Gastrocnemius medialis (tissue), 4 donors: ENCODE measurements at regions of chr7 and their contacts with region 1.

Region 1: GRCh38 chr7:107277331-107277730 is 108.5 kb downstream of the HBP1 start:
- DNase-seq: peak; percentile 35 to 39
- ATAC-seq: peak; percentile 99 to 100
- H3K4me3 ChIP-seq: peak overlapping the region; percentile 15 to 32 (median 27)
- H3K27ac ChIP-seq: peak overlapping the region; percentile 59 to 83 (median 76)
- H3K4me1 ChIP-seq: peaks cover 14 to 25% of the 10 kb centered on the region in 2 donors
- H3K27me3 ChIP-seq: no peaks in the 10 kb centered on the region
- CTCF ChIP-seq: no peak
- POLR2A ChIP-seq: peak in 1 of 2 donors; percentile 8

Region 2: DNA sequence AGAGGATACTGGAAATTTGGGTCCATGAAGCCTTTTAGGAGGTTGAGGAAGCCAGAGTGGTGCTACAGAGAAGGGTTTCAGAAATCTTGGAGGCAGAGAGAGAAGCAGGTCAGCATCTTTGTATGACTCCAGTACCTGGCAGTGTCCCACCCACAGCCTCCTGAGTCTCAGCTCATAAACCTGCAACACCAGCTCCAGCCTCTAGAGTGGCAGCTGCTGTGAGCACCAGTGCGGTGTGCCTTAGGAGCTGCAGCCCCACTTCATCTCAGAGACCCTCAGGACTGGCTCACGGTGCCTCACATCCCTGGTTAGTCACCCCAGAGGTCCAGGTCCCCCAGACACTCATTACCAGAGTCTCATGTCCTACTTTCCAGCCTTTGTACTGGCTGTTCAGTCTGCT is 317.6 kb before region 1 on chr7:
- in situ Hi-C with region 1: no loop called
- intact Hi-C with region 1: no loop called
- DNase-seq: no peak
- ATAC-seq: no peak
- H3K4me3 ChIP-seq: no peak overlapping the region
- H3K27ac ChIP-seq: no peak overlapping the region
- H3K4me1 ChIP-seq: no peaks in the 10 kb centered on the region
- H3K27me3 ChIP-seq: no peaks in the 10 kb centered on the region
- CTCF ChIP-seq: no peak
- POLR2A ChIP-seq: no peak

Region 3: GRCh38 chr7:107103363-107103762 is 174.0 kb before region 1 on chr7:
- in situ Hi-C with region 1: no loop called
- intact Hi-C with region 1: no loop called
- DNase-seq: no peak
- ATAC-seq: no peak
- H3K4me3 ChIP-seq: no peak overlapping the region
- H3K27ac ChIP-seq: no peak overlapping the region
- H3K4me1 ChIP-seq: no peaks in the 10 kb centered on the region
- H3K27me3 ChIP-seq: no peaks in the 10 kb centered on the region
- CTCF ChIP-seq: no peak
- POLR2A ChIP-seq: no peak

Region 4: GRCh38 chr7:107208024-107208521 is 69.3 kb before region 1 on chr7:
- in situ Hi-C with region 1: no loop called
- intact Hi-C with region 1: loop called (anchors 5 kb)
- DNase-seq: no peak
- ATAC-seq: peak; percentile 67 to 79
- H3K4me3 ChIP-seq: no peak overlapping the region
- H3K27ac ChIP-seq: peak overlapping the region; percentile 72 to 78 (median 78)
- H3K4me1 ChIP-seq: peaks cover 19 to 22% of the 10 kb centered on the region in 2 donors
- H3K27me3 ChIP-seq: no peaks in the 10 kb centered on the region
- CTCF ChIP-seq: no peak
- POLR2A ChIP-seq: no peak

Region 5: DNA sequence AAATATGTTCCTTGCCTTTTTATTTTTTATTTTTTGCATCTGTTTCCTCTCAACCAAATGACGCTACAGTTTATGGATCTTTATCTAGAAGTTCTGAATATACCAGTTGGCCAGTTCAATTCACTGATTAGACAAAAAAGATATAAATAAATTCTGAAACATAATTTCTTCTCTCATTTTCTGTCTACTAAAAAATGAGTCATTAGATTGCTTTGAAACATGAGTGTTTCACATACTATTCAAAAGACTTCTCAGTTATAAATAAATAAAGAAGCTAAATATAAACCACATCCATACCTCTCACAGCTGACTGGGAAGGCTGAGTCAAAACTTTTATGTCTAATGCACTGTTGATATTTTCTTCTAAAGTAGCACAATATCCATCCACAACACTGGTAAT is 95.0 kb after region 1 on chr7:
- in situ Hi-C with region 1: no loop called
- intact Hi-C with region 1: no loop called
- DNase-seq: no peak
- ATAC-seq: peak; percentile 82 to 97
- H3K4me3 ChIP-seq: no peak overlapping the region
- H3K27ac ChIP-seq: peak overlapping the region in 3 of 4 donors; percentile 31 to 49 (median 44)
- H3K4me1 ChIP-seq: peaks cover 0 to 11% of the 10 kb centered on the region in 2 donors
- H3K27me3 ChIP-seq: no peaks in the 10 kb centered on the region
- CTCF ChIP-seq: no peak
- POLR2A ChIP-seq: no peak

Region 6: GRCh38 chr7:107427462-107427861 is 150.1 kb after region 1 on chr7:
- in situ Hi-C with region 1: no loop called
- intact Hi-C with region 1: no loop called
- DNase-seq: no peak
- ATAC-seq: no peak
- H3K4me3 ChIP-seq: no peak overlapping the region
- H3K27ac ChIP-seq: no peak overlapping the region
- H3K4me1 ChIP-seq: peaks cover 15 to 19% of the 10 kb centered on the region in 2 donors
- H3K27me3 ChIP-seq: no peaks in the 10 kb centered on the region
- CTCF ChIP-seq: no peak
- POLR2A ChIP-seq: no peak